Adrenal gland (tissue), 19 donors: ENCODE measurements at regions of chr22 and their contacts with region 1.

Region 1: GRCh38 chr22:22593964-22594656 is 35.0 kb upstream of the PRAME start:
- DNase-seq: peak; percentile 46 to 78 (median 60)
- H3K4me3 ChIP-seq: no peak overlapping the region
- H3K27ac ChIP-seq: no peak overlapping the region
- H3K4me1 ChIP-seq: no peaks in the 10 kb centered on the region
- H3K27me3 ChIP-seq: no peaks in the 10 kb centered on the region
- CTCF ChIP-seq: peak; percentile 57 to 69 (median 63)
- POLR2A ChIP-seq: no peak

Region 2: DNA sequence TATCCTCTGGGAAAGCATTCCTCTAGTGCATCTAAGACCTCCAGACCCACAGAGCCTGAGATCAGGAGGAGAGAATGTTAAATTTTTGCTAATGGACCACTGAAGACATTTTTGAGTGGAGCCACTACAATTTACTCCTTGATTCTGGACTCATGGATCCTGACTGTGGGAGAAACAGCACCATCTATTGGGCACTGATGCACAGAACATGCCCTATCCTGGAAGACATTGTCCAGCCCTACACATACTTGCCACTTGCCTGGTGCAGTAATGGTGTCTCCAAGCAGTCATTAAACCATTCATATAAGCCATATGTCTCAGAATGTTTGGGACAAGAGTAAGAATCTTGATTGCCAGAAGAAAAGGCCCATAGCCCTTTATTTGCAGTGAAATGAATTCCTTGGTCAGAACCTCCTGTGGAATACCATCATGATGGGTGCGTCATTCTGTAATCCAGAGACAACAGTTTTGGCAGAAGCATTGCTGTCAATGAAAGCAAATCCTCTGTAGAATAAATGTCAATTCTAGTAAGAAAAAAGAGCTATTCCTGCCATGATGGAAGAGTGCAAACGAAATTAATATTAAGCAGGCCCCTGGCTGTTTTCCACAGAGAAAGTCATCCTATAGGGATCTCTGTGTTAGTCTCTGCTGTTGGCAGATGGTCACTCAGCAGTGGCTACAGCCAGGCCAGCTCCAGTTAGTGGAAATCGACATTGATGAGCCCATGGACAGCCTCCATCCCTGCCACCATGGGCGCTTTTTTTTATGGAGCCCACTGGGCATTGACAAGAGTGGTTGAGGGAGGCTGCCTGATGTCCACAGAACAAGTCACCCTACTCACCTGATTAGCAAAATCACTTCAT is 93.8 kb after region 1 on chr22:
- intact Hi-C with region 1: loop called in 1 of 2 experiments (anchors 5 kb)
- DNase-seq: peak; percentile 48 to 76 (median 60)
- H3K4me3 ChIP-seq: no peak overlapping the region
- H3K27ac ChIP-seq: no peak overlapping the region
- H3K4me1 ChIP-seq: no peaks in the 10 kb centered on the region
- H3K27me3 ChIP-seq: no peaks in the 10 kb centered on the region
- CTCF ChIP-seq: peak; percentile 56 to 85 (median 64)
- POLR2A ChIP-seq: no peak